Activated CD4-positive, alpha-beta T cell treated with anti-CD3 and anti-CD28 coated beads for 36 hours (primary cell): ENCODE measurements at regions of chr6 and their contacts with region 1.

Region 1: DNA sequence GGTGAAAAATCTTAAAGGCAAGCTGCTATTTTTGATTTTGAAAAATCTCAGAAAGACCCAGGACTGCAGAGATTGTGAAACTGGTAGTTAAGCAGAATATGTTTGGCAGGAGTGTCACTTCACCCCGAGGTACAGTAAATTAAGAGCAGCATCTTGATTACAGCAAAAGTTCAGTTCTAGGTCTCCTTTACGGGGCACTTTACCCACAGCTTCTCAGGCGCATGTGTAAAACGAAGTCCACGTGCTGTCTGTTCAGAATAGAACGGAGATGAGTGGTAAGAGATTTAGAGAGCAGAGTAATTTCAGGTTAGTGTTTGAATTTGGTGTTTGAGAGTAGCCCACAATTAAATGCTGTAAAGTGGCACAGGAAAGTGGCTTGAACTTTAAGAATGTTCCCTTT is 84.0 kb downstream of the FARS2 start:
- DNase-seq: no peak
- ATAC-seq: no peak
- H3K4me3 Mint-ChIP-seq: no peak overlapping the region
- H3K27ac Mint-ChIP-seq: no peak overlapping the region
- H3K4me1 Mint-ChIP-seq: peaks cover 6% of the 10 kb centered on the region
- H3K27me3 Mint-ChIP-seq: no peaks in the 10 kb centered on the region

Region 2: DNA sequence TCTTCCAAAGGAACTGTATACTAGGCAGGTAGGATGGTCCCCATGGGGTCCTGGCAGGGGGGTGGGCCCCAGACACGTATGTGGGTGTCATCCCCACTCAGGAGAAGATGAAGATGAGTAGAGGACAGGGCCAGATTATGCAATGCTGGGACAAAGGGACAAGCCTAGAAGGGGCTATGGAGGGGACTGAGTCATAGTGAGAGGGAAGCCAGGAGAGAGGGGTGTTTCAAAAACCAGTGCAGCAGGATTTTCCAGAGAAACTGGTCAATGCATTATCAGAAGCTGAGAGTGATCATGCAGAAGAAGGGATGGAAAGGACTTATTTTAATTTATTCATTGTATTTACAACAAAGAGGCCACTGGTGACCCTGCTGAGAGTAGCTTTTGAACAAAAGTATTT is 186.2 kb before region 1 on chr6:
- CTCF ChIA-PET with region 1: no interaction called
- POLR2A ChIA-PET with region 1: no interaction called
- intact Hi-C with region 1: no loop called
- DNase-seq: no peak
- ATAC-seq: no peak
- H3K4me3 Mint-ChIP-seq: no peak overlapping the region
- H3K27ac Mint-ChIP-seq: no peak overlapping the region
- H3K4me1 Mint-ChIP-seq: no peaks in the 10 kb centered on the region
- H3K27me3 Mint-ChIP-seq: no peaks in the 10 kb centered on the region

Region 3: DNA sequence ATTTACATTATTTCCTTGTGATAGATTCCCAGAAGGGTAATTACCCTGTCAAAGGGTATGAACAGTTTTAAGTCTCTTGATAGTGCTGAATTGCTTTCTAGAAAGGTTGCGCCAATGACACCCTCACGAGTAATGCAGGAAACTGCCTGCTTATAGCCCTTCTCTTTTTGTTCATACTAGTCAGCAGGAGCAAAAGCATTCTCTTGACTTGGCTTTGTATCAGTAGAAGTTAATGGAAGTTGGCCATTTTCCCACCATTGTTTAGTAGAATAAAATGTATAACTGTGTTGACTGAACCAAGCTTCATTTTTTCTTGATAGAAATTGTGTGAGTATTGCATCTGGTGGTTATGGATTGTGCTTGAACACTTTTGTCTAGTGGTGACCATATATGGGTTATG is 16.1 kb after region 1 on chr6:
- CTCF ChIA-PET with region 1: no interaction called
- POLR2A ChIA-PET with region 1: no interaction called
- intact Hi-C with region 1: loop called in 1 of 2 experiments (anchors 1 kb)
- DNase-seq: no peak
- ATAC-seq: peak; percentile 53
- H3K4me3 Mint-ChIP-seq: no peak overlapping the region
- H3K27ac Mint-ChIP-seq: no peak overlapping the region
- H3K4me1 Mint-ChIP-seq: peaks cover 5% of the 10 kb centered on the region
- H3K27me3 Mint-ChIP-seq: no peaks in the 10 kb centered on the region